CD4-positive, alpha-beta T cell (primary cell): ENCODE measurements at regions of chr3 and their contacts with region 1.

Region 1: DNA sequence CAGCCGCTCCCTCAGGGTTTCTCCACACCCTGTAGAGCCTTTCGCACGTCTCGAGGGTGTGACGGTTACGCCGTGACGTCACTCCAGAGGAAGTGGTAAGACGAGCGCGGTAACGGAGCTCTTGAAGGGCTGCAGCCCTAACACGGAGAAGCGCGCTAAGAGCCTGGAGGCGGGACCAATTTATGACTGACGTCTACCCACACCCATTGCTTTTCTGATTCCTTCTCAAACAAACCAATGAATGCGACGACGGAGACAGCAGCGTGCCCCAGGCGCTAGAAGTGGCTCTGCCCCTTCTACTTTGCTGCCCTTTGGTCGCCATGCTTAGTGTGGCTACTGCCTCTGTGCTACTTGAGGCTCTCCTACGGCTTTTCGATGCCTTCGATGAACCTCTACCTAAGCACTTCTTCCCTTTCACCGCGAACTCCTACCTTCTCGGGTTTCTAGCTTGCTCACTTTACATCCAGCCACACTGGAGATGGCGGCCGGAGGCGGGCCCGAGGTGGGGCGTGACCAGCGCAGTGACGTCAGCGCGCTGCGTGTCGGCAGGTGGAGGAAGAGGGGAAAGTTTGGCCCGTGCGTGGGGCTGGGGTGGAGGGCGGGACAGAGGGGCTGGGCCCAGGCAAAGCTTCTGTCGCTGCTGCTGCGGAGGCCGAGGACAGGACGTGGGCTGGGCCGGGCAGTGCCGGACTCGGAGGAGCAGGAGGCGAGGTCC is at the start of gene OXSR1:
- DNase-seq: peak; percentile 91 to 100 (median 95)
- ATAC-seq: peak; percentile 89
- H3K4me3 ChIP-seq: peak within 1 kb of the TSS; percentile 80
- H3K4me3 Mint-ChIP-seq: peak within 1 kb of the TSS; percentile 91
- H3K27ac ChIP-seq: peak within 1 kb of the TSS; percentile 98 to 100
- H3K27ac Mint-ChIP-seq: peak within 1 kb of the TSS; percentile 99
- H3K4me1 ChIP-seq: peaks cover 37% of the 10 kb centered on the region
- H3K4me1 Mint-ChIP-seq: peaks cover 52% of the 10 kb centered on the region
- H3K27me3 ChIP-seq: no peaks in the 10 kb centered on the region
- H3K27me3 Mint-ChIP-seq: no peaks in the 10 kb centered on the region
- CTCF ChIP-seq: no peak
- total RNA-seq, gene OXSR1: 28.3 to 30.3 TPM

Region 2: DNA sequence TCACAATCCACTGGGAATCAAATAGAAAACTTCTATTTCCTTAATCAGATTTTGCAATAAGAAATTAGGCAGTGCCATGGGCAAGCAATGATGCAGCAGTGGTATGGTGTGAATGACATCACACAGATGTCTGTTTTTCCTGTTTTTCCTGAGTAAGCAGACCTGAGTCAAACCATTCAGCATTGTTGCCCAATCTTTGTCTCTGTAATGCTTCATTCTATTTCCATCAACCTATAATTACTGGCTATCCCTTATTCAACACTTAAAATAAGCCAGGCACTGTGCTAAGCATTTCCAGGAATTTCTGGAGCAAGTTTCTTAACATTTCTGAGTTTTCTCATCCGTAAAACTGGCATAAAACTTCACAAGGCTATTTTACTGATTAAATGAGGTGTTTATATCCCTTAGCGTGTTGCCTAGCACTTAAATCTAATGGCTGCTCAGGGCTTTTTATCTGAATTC is 11.1 kb before region 1 on chr3:
- CTCF ChIA-PET with region 1: interaction called, 7 read pairs
- POLR2A ChIA-PET with region 1: interaction called, 17 read pairs
- intact Hi-C with region 1: no loop called
- DNase-seq: peak in 2 of 14 experiments; percentile 51 to 64
- ATAC-seq: no peak
- H3K4me3 ChIP-seq: no peak overlapping the region
- H3K4me3 Mint-ChIP-seq: no peak overlapping the region
- H3K27ac ChIP-seq: no peak overlapping the region
- H3K27ac Mint-ChIP-seq: no peak overlapping the region
- H3K4me1 ChIP-seq: peaks cover 17% of the 10 kb centered on the region
- H3K4me1 Mint-ChIP-seq: peaks cover 24% of the 10 kb centered on the region
- H3K27me3 ChIP-seq: no peaks in the 10 kb centered on the region
- H3K27me3 Mint-ChIP-seq: no peaks in the 10 kb centered on the region
- CTCF ChIP-seq: no peak